K562 (cell line): ENCODE measurements at regions of chr11 and their contacts with region 1.

Region 1: DNA sequence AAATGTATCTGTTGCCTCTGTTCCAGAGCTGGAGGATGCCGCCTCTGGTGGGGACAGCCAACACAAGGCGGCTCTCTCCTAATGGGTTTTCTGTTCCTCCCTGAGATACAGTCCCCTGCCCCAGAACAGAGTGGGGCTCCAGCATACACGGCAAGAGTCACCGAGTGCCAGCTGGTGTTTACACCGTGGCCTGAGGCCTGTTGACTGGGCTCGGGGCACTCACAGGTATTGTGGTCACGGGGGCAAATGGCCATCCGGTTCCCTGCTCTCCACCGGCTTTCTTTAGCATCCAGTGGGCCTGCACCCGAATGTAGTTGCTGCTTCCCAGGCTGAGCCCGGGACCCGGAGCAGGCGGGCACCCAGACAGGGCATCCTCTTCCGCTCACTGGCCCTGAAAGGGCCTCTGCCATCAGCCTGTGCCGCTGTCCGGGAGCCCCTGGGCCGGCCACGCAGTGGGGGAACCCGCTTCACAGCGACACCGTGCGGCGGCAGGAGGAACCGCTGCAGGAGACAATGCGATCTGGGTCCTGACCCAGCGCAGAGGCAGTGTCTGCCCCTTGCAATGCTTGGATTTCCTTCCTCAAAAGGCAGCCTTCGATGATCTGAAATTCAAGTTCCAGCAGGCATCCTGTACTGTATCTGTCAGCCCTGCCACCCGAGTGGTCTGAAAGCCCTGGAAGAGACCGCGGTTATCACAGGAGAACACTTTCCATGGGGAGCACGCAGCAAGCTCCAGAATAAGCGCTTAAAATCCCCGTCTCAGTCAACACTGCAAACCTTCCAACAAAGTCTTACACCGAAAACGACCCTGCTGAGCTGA is 859 bp upstream of the KRTAP5-5 start:
- DNase-seq: peak; percentile 59 to 86 (median 82)
- ATAC-seq: peak; percentile 100
- H3K4me3 ChIP-seq: no peak overlapping the region
- H3K27ac ChIP-seq: no peak overlapping the region
- H3K4me1 ChIP-seq: peaks cover 0 to 5% of the 10 kb centered on the region in 2 experiments; a peak in 1 of 5 replicates
- H3K27me3 ChIP-seq: peaks cover 25 to 77% of the 10 kb centered on the region in 2 experiments
- CTCF ChIP-seq: peak; percentile 88 to 91 (median 90)
- EP300 ChIP-seq: no peak
- POLR2A ChIP-seq: no peak
- RAD21 ChIP-seq: peak; percentile 38 to 69; a peak in 3 of 4 replicates

Region 2: GRCh38 chr11:1592628-1593027 is 36.1 kb before region 1 on chr11:
- CTCF ChIA-PET with region 1: interaction called, 8 read pairs
- POLR2A ChIA-PET with region 1: no interaction called
- in situ Hi-C with region 1: loop called (anchors 5 kb)
- intact Hi-C with region 1: no loop called
- DNase-seq: no peak
- ATAC-seq: no peak
- H3K4me3 ChIP-seq: no peak overlapping the region
- H3K27ac ChIP-seq: no peak overlapping the region
- H3K4me1 ChIP-seq: no peaks in the 10 kb centered on the region
- H3K27me3 ChIP-seq: peaks cover 17 to 44% of the 10 kb centered on the region in 2 experiments; a peak in 3 of 5 replicates
- CTCF ChIP-seq: no peak
- EP300 ChIP-seq: no peak
- POLR2A ChIP-seq: no peak
- RAD21 ChIP-seq: no peak